Heart left ventricle (tissue), 16 donors: ENCODE measurements at regions of chr11 and their contacts with region 1.

Region 1: DNA sequence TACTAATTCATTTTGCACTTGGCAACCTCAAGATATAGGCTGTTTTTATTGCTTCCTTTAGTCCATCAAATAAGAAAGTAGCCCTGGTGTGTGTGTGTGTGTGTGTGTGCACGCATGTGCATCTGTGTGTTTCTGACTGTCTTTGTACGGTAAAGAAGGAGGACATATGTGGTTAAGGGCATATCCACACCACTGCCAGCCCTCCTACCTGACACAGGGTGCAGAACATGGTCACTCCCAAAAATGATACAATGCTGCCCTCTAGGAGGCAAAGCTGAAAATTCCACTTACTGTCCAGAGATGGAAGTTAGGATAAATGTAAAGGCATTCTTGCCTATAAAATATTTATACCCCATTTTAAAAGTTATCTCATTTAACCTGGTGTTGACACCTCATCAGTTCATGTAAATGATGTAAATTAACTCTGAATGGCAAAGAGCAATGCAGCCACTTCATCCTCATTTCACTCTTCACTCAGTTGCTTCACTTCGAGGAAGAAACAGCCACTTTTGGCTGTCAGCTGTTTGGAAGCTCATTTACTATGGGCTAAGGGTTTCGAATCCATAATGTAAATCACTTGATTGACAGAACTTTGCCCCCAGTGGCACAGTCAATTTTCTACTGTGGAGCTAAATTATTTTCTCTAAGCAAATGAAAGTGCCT is 83.1 kb upstream of the MTNR1B start:
- DNase-seq: peak in 1 of 5 donors; percentile 18
- ATAC-seq: peak; percentile 64 to 80 (median 76)
- H3K4me3 ChIP-seq: no peak overlapping the region
- H3K27ac ChIP-seq: no peak overlapping the region
- H3K4me1 ChIP-seq: peaks cover 0 to 5% (median 0%) of the 10 kb centered on the region in 12 donors
- H3K27me3 ChIP-seq: no peaks in the 10 kb centered on the region
- CTCF ChIP-seq: peak; percentile 24 to 76 (median 60)
- POLR2A ChIP-seq: no peak

Region 2: GRCh38 chr11:92211576-92212167 is 674.7 kb before region 1 on chr11:
- intact Hi-C with region 1: loop called in 7 of 10 experiments (anchors 5 kb)
- DNase-seq: peak in 2 of 5 donors; percentile 10 to 51
- ATAC-seq: peak; percentile 61 to 83 (median 74)
- H3K4me3 ChIP-seq: no peak overlapping the region
- H3K27ac ChIP-seq: no peak overlapping the region
- H3K4me1 ChIP-seq: no peaks in the 10 kb centered on the region
- H3K27me3 ChIP-seq: peaks cover 0 to 11% (median 0%) of the 10 kb centered on the region in 9 donors
- CTCF ChIP-seq: peak in 10 of 12 donors; percentile 16 to 52 (median 34)
- POLR2A ChIP-seq: no peak

Region 3: GRCh38 chr11:92340839-92341238 is 545.5 kb before region 1 on chr11:
- intact Hi-C with region 1: loop called in 1 of 10 experiments (anchors 10 kb)
- DNase-seq: no peak
- ATAC-seq: no peak
- H3K4me3 ChIP-seq: no peak overlapping the region
- H3K27ac ChIP-seq: no peak overlapping the region
- H3K4me1 ChIP-seq: no peaks in the 10 kb centered on the region
- H3K27me3 ChIP-seq: no peaks in the 10 kb centered on the region
- CTCF ChIP-seq: peak in 6 of 12 donors; percentile 20 to 43 (median 29)
- POLR2A ChIP-seq: no peak